ENCODE measurements at regions of chr18 and their contacts with region 1.

Region 1: DNA sequence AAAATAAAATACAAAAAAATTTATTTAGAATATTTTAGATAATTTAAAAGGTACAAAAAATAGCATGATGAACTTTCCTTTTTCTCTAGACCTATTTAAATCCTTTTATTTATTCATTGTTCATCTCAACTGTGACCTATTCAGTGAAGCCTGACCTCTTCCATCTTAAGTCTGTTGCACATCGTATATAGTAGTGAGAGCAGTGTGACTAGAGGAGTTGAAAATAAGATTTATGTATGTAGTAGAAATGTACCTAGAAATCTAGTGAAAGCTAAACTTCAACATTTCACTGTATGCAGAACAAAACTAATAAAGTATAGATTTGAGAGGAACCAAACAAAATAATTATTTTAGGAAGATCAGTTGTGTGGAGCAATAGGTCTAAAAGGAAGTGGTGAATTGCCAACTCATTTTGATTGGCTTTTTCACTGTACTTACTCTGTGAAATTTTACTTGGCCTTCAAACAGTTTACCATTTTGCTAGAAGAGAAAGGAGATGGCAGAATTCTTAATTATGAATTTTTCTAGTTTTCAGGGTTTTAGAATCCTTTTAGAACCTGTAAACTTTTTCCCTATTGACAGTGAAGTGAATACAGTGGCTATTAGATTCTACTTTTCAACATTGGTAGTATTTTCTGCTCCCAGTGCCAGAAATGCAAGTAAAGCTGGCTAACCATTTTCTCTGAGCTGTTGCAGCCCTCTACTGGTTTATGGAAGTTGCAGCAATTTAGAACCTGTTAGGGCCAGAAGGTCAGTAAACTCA is 11.0 kb downstream of the ANKRD12 start:
- DNase-seq: peak; percentile 53
- ATAC-seq: peak; percentile 72
- H3K4me3 ChIP-seq: peak overlapping the region; percentile 32; the same call in 1 of the 2 replicates
- H3K27ac ChIP-seq: peak overlapping the region; percentile 71
- H3K4me1 ChIP-seq: peaks cover 48% of the 10 kb centered on the region
- H3K27me3 ChIP-seq: no peaks in the 10 kb centered on the region
- CTCF ChIP-seq: peak; percentile 69 to 88 (median 86)
- EP300 ChIP-seq: no peak
- POLR2A ChIP-seq: no peak
- RAD21 ChIP-seq: peak; percentile 94

Region 2: DNA sequence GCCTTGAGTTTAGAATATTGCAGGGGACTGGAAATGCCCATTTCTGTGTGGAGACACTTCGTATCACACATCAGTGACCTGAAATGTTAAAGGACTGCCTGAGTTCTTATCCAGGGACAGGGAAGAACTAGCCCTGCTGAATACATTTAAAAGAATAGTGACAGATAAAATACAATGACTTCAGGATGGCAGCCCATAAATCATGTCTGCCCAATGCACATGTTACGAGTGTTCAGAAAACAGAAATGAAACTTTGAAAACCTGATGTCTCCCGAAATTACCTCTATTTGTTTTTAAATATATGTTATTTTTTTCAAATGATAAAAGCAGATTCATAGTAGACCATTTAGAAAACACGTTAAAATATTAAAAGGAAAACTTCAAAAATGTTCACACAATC is 560.7 kb before region 1 on chr18:
- CTCF ChIA-PET with region 1: no interaction called
- POLR2A ChIA-PET with region 1: no interaction called
- RAD21 ChIA-PET with region 1: no interaction called
- SMC1A ChIA-PET with region 1: no interaction called
- in situ Hi-C with region 1: no loop called
- intact Hi-C with region 1: no loop called
- DNase-seq: no peak
- ATAC-seq: no peak
- H3K4me3 ChIP-seq: no peak overlapping the region
- H3K27ac ChIP-seq: no peak overlapping the region
- H3K4me1 ChIP-seq: no peaks in the 10 kb centered on the region
- H3K27me3 ChIP-seq: no peaks in the 10 kb centered on the region
- CTCF ChIP-seq: no peak
- EP300 ChIP-seq: no peak
- POLR2A ChIP-seq: no peak
- RAD21 ChIP-seq: no peak

Region 3: GRCh38 chr18:8654503-8655451 is 492.8 kb before region 1 on chr18:
- CTCF ChIA-PET with region 1: interaction called, 7 read pairs
- POLR2A ChIA-PET with region 1: no interaction called
- RAD21 ChIA-PET with region 1: no interaction called
- SMC1A ChIA-PET with region 1: no interaction called
- in situ Hi-C with region 1: no loop called
- intact Hi-C with region 1: loop called (anchors 10 kb)
- DNase-seq: no peak
- ATAC-seq: peak; percentile 47; the same call in 1 of the 3 replicates
- H3K4me3 ChIP-seq: no peak overlapping the region
- H3K27ac ChIP-seq: no peak overlapping the region
- H3K4me1 ChIP-seq: no peaks in the 10 kb centered on the region
- H3K27me3 ChIP-seq: no peaks in the 10 kb centered on the region; a peak in 1 of 4 replicates
- CTCF ChIP-seq: peak; percentile 51 to 71 (median 70); a peak in 5 of 6 replicates
- EP300 ChIP-seq: no peak
- POLR2A ChIP-seq: no peak
- RAD21 ChIP-seq: peak; percentile 81

Region 4: DNA sequence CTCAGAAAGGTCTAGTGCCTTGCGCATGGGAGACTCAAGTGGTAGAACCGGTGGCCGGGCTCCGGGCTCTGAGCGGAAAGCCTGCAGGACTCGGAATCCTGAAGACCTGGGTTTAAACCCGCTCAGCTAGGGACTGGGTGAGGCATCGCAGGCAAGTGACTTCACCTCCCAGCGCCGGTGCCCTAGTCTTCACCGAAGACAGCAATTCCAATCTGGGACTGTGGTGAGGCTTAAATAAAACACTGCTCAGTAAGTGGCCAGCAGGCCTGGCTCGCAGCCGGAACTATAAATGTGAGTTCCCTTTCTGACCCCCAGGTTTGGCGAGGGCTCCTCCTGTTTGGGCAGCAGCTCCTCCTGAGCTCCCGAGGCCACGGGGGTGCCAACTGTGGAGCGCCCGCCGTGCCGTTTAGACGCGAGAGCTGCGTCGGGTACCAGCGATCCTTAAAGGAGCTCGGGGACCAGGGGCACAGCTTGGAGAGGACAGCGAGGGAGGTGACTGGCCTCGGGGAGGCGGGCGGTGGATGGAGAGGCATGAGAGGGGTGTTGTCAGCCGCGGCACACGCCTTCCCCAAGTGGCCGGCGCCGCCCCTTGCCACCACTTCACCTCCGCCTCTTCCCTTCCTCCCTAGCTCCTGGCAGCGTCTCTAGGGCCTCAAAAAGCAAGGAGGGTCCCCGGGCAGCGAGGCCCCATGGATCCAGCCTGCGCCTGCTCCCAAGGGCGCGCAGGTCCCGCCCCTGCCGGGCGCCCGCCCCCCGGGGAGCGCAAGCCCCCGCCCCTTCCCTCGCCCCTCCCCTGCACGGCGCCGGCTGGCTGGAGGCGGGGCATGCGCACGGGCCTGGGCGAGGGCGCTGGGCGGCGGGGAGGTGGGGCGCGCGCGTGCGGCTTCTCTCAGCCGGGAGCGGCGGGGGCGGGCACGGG is 443.0 kb before region 1 on chr18:
- CTCF ChIA-PET with region 1: no interaction called
- POLR2A ChIA-PET with region 1: no interaction called
- RAD21 ChIA-PET with region 1: no interaction called
- SMC1A ChIA-PET with region 1: no interaction called
- in situ Hi-C with region 1: loop called (anchors 10 kb)
- intact Hi-C with region 1: loop called (anchors 10 kb)
- DNase-seq: no peak
- ATAC-seq: peak; percentile 97
- H3K4me3 ChIP-seq: peak overlapping the region; percentile 92
- H3K27ac ChIP-seq: no peak overlapping the region
- H3K4me1 ChIP-seq: peaks cover 7% of the 10 kb centered on the region
- H3K27me3 ChIP-seq: peaks cover 19 to 37% of the 10 kb centered on the region in 2 experiments
- CTCF ChIP-seq: no peak
- EP300 ChIP-seq: no peak
- POLR2A ChIP-seq: no peak
- RAD21 ChIP-seq: no peak

Region 5: GRCh38 chr18:9082711-9083510 is 64.7 kb before region 1 on chr18:
- CTCF ChIA-PET with region 1: interaction called, 18 read pairs
- POLR2A ChIA-PET with region 1: interaction called, 3 read pairs
- RAD21 ChIA-PET with region 1: interaction called, 20 read pairs
- SMC1A ChIA-PET with region 1: interaction called, 45 read pairs
- in situ Hi-C with region 1: no loop called
- intact Hi-C with region 1: no loop called
- DNase-seq: peak; percentile 68
- ATAC-seq: peak; percentile 98
- H3K4me3 ChIP-seq: peak overlapping the region; percentile 43
- H3K27ac ChIP-seq: peak overlapping the region; percentile 54
- H3K4me1 ChIP-seq: peaks cover 11% of the 10 kb centered on the region; the same call in 1 of the 2 replicates
- H3K27me3 ChIP-seq: no peaks in the 10 kb centered on the region
- CTCF ChIP-seq: no peak; a peak in 1 of 6 replicates
- EP300 ChIP-seq: peak; percentile 16 to 55; a peak in 2 of 4 replicates
- POLR2A ChIP-seq: no peak
- RAD21 ChIP-seq: peak; percentile 48

Region 6: DNA sequence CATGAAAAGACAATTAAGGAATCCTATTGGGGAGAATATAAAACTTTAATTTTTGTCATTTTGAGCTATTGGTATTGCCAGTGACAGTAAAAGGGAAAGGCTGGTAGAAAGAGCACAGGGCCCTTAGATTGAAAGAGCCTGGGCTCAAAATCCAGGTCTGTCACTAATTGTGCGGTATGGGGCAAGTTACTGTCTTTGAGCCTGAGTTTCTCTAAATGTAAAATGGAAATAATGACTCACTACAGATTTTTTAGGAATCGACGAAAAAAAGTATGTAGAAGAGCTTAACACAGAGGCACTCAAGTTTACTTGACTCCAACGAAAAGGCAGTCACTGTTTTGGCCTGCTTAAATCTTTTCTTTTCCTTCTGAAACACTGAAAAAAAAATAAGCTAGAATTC is 38.1 kb before region 1 on chr18:
- CTCF ChIA-PET with region 1: interaction called, 95 read pairs
- POLR2A ChIA-PET with region 1: interaction called, 85 read pairs
- RAD21 ChIA-PET with region 1: interaction called, 73 read pairs
- SMC1A ChIA-PET with region 1: interaction called, 137 read pairs
- in situ Hi-C with region 1: no loop called
- intact Hi-C with region 1: no loop called
- DNase-seq: no peak
- ATAC-seq: no peak
- H3K4me3 ChIP-seq: peak overlapping the region; percentile 44; the same call in 1 of the 2 replicates
- H3K27ac ChIP-seq: no peak overlapping the region; the same call in 1 of the 2 replicates
- H3K4me1 ChIP-seq: peaks cover 9% of the 10 kb centered on the region
- H3K27me3 ChIP-seq: no peaks in the 10 kb centered on the region
- CTCF ChIP-seq: no peak
- EP300 ChIP-seq: no peak
- POLR2A ChIP-seq: no peak
- RAD21 ChIP-seq: no peak

Region 7: GRCh38 chr18:9136315-9137155 is 11.1 kb before region 1 on chr18 and contains the start of gene ANKRD12:
- CTCF ChIA-PET with region 1: interaction called, 6 read pairs
- POLR2A ChIA-PET with region 1: interaction called, 4 read pairs
- RAD21 ChIA-PET with region 1: interaction called, 4 read pairs
- SMC1A ChIA-PET with region 1: interaction called, 23 read pairs
- in situ Hi-C with region 1: no loop called
- intact Hi-C with region 1: no loop called
- DNase-seq: peak; percentile 89
- ATAC-seq: peak; percentile 86
- H3K4me3 ChIP-seq: peak within 1 kb of the TSS; percentile 92
- H3K27ac ChIP-seq: peak within 1 kb of the TSS; percentile 80
- H3K4me1 ChIP-seq: no peaks in the 10 kb centered on the region; the same call in 1 of the 2 replicates
- H3K27me3 ChIP-seq: no peaks in the 10 kb centered on the region
- CTCF ChIP-seq: no peak
- EP300 ChIP-seq: 0 out of 4 replicates have a peak, but pooled peaks of 1 of the 2 experiments have one; percentile 16
- POLR2A ChIP-seq: peak; percentile 90
- RAD21 ChIP-seq: no peak
- polyA plus RNA-seq, gene ANKRD12: 20.0 to 20.3 TPM